ENCODE measurements at regions of chr10 and their contacts with region 1.

Region 1: GRCh38 chr10:60646966-60647796 is 131.1 kb upstream of the CDK1 start:
- DNase-seq: peak in 3 of 5 donors; percentile 36 to 82 (median 76)
- H3K4me3 ChIP-seq: no peak overlapping the region
- H3K27ac ChIP-seq: no peak overlapping the region
- H3K4me1 ChIP-seq: peaks cover 0 to 17% (median 8%) of the 10 kb centered on the region in 3 donors
- H3K27me3 ChIP-seq: no peaks in the 10 kb centered on the region
- CTCF ChIP-seq: peak; percentile 85

Region 2: DNA sequence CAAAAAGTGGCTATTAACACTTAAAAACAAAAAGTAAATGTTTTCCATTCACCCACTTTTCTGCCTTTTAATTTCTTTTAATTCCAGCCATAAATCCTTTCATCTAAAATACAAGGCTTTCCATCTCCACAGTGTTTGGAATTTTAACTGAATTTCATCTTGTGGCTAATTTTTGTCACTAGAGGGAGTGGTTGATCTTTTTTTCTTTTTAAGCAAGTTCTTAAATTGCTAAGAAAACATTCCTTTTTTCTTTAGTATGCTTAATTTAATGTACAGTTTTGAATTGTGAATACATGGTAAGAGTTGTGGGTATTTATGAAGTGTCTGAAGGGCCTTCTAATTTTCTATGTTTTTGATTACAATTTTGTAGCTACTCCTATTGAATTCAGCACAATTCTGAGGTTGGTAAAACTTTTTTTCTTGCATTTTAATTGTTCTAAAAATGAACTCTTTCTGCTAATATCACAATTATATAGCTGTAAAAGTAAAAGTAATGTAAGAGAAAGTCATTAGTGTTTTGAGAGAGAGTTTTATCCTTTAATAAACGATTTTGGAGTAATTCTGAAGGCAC is 202.6 kb before region 1 on chr10:
- intact Hi-C with region 1: loop called (anchors 5 kb)
- DNase-seq: peak in 2 of 5 donors; percentile 35 to 55
- H3K4me3 ChIP-seq: no peak overlapping the region
- H3K27ac ChIP-seq: no peak overlapping the region
- H3K4me1 ChIP-seq: peaks cover 0 to 21% (median 3%) of the 10 kb centered on the region in 3 donors
- H3K27me3 ChIP-seq: no peaks in the 10 kb centered on the region
- CTCF ChIP-seq: peak; percentile 48